ENCODE measurements at regions of chr2 and their contacts with region 1.

Region 1: GRCh38 chr2:181499231-181499630 is 42.0 kb downstream of the ITGA4 start:
- DNase-seq: no peak
- H3K4me3 ChIP-seq: no peak overlapping the region
- H3K27ac ChIP-seq: no peak overlapping the region
- H3K4me1 ChIP-seq: no peaks in the 10 kb centered on the region
- H3K27me3 ChIP-seq: no peaks in the 10 kb centered on the region
- CTCF ChIP-seq: no peak

Region 2: DNA sequence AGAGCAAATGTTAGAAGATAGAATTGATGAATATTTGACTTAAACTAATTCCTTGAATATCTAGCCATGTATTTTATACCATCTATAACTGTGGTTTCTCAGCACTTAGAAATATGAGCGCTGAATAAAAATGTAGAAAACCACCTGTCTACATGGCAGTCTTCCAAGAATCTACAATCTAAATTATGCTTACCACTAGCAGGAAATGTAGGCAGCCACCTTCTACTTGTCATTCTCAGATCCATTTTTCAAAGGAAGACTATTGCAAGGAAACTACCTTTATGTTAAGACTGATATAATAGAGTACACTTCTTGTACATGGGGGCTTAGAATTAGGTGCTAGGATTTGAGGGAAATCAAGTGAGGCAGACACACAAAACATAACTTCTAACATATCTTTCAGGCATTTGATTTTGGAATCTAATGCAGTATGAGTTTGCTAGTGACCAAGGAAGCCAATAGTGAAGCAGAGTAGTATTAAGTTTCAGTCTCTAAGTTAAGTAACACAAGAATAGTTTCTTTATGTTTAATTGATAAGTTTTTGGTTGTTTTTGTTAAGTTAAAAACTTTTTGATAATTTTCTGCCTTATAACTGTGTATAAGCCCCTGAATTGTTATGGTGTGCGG is 217.9 kb before region 1 on chr2:
- CTCF ChIA-PET with region 1: interaction called, 12 read pairs
- POLR2A ChIA-PET with region 1: no interaction called
- intact Hi-C with region 1: no loop called
- DNase-seq: no peak
- H3K4me3 ChIP-seq: no peak overlapping the region
- H3K27ac ChIP-seq: no peak overlapping the region
- H3K4me1 ChIP-seq: no peaks in the 10 kb centered on the region
- H3K27me3 ChIP-seq: no peaks in the 10 kb centered on the region
- CTCF ChIP-seq: no peak

Region 3: GRCh38 chr2:181374781-181375675 is 124.2 kb before region 1 on chr2:
- CTCF ChIA-PET with region 1: no interaction called
- POLR2A ChIA-PET with region 1: interaction called, 10 read pairs
- intact Hi-C with region 1: no loop called
- DNase-seq: no peak
- H3K4me3 ChIP-seq: no peak overlapping the region
- H3K27ac ChIP-seq: no peak overlapping the region
- H3K4me1 ChIP-seq: peaks cover 10% of the 10 kb centered on the region
- H3K27me3 ChIP-seq: no peaks in the 10 kb centered on the region
- CTCF ChIP-seq: no peak

Measured in PC-9 (cell line).